ENCODE measurements at regions of chr7 and their contacts with region 1.

Region 1: GRCh38 chr7:4681886-4682620 is at the start of gene FOXK1:
- DNase-seq: peak; percentile 78 to 93 (median 93)
- ATAC-seq: peak; percentile 74 to 86
- H3K4me3 ChIP-seq: peak within 1 kb of the TSS; percentile 97
- H3K27ac ChIP-seq: peak within 1 kb of the TSS; percentile 87
- H3K4me1 ChIP-seq: peaks cover 3% of the 10 kb centered on the region
- H3K27me3 ChIP-seq: no peaks in the 10 kb centered on the region
- total RNA-seq, gene FOXK1: 15.4 to 22.4 (median 20.3) TPM

Region 2: DNA sequence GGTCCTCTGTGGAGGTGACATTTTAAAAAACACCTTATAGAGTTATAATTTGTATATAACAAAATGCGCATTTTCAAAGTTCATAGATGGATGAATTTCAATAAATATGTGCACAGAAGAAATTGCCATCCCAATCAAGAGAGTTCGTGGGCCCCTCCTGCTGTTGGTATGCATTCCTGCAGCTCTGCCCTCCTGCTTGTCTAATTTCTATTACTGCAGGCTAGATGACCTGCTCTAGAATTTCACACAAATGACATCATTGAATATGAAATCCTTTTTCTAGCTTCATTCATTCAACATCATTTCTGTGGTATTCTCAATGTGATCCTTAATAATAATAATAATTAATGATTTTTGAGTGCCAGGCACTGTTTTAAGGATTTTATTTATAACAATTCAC is 1032.8 kb before region 1 on chr7:
- intact Hi-C with region 1: no loop called
- DNase-seq: no peak
- ATAC-seq: no peak
- H3K4me3 ChIP-seq: no peak overlapping the region
- H3K27ac ChIP-seq: no peak overlapping the region
- H3K4me1 ChIP-seq: no peaks in the 10 kb centered on the region
- H3K27me3 ChIP-seq: no peaks in the 10 kb centered on the region

Region 3: GRCh38 chr7:4641667-4642467 is 40.2 kb before region 1 on chr7:
- intact Hi-C with region 1: loop called (anchors 5 kb)
- DNase-seq: peak; percentile 96 to 99 (median 99)
- ATAC-seq: peak; percentile 97 to 98
- H3K4me3 ChIP-seq: peak overlapping the region; percentile 69
- H3K27ac ChIP-seq: peak overlapping the region; percentile 70
- H3K4me1 ChIP-seq: no peaks in the 10 kb centered on the region
- H3K27me3 ChIP-seq: no peaks in the 10 kb centered on the region

Region 4: GRCh38 chr7:4738711-4739527 is 56.9 kb after region 1 on chr7:
- intact Hi-C with region 1: loop called in 2 of 4 experiments (anchors 5 to 10 kb)
- DNase-seq: peak; percentile 56 to 72 (median 65)
- ATAC-seq: peak; percentile 55 to 79
- H3K4me3 ChIP-seq: peak overlapping the region; percentile 34
- H3K27ac ChIP-seq: peak overlapping the region; percentile 71
- H3K4me1 ChIP-seq: peaks cover 5% of the 10 kb centered on the region
- H3K27me3 ChIP-seq: no peaks in the 10 kb centered on the region

Region 5: DNA sequence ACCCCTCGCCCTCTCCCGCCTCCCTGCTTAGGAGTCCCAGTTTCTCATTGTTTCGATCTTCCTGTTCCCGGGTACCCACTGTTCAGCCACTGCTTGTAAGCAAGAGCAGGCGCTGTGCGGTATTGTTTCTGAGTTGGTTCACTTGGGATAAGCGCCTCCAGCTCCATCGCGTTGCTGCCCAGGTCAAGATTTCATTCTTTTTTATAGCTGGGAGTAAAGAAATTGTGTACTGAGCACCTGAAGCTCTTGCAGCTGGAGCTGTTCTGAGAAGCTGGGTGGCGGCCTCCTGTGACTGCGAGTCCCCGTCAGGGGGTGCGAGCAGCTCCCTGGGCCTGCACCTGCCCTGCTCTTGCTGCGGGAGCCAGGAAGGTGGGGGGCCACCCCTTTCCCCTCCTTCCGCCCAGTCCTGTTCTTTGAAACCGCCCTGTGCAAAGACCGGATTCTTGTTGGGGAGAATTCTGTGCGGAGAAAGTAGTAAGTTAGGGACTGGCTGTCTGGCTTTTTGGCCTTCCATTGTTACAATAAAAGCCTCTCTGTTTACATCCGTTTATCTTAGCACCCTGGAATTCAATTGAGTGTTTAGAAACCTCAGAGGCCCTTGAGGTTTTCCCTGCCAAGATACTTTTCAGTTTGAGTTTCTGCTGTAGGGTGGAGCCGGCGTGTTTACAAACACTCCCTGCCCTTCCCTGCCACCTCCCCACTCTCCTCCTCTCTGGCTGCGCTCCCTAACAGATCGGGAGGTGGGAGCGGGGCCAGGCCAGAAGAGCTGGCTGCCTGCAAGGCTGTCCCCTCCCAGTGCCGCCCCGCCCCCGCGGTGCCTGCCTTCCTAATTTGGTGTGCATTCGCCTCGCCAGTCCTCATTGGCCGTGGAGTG is 62.6 kb after region 1 on chr7:
- intact Hi-C with region 1: loop called in 2 of 4 experiments (anchors 5 to 10 kb)
- DNase-seq: peak; percentile 100
- ATAC-seq: peak; percentile 96
- H3K4me3 ChIP-seq: peak overlapping the region; percentile 1
- H3K27ac ChIP-seq: peak overlapping the region; percentile 96
- H3K4me1 ChIP-seq: peaks cover 9% of the 10 kb centered on the region
- H3K27me3 ChIP-seq: no peaks in the 10 kb centered on the region

Region 6: GRCh38 chr7:4753711-4754432 is 71.8 kb after region 1 on chr7:
- intact Hi-C with region 1: loop called (anchors 5 to 10 kb)
- DNase-seq: peak; percentile 77 to 92 (median 90)
- ATAC-seq: peak; percentile 82 to 83
- H3K4me3 ChIP-seq: no peak overlapping the region
- H3K27ac ChIP-seq: no peak overlapping the region
- H3K4me1 ChIP-seq: no peaks in the 10 kb centered on the region
- H3K27me3 ChIP-seq: no peaks in the 10 kb centered on the region